Heart right ventricle (tissue), 16 donors: ENCODE measurements at regions of chr5 and their contacts with region 1.

Region 1: GRCh38 chr5:146446853-146447733 is at the start of gene TCERG1:
- DNase-seq: peak; percentile 99 to 100
- ATAC-seq: peak; percentile 95 to 99 (median 98)
- H3K4me3 ChIP-seq: peak within 1 kb of the TSS; percentile 66 to 99 (median 94)
- H3K27ac ChIP-seq: peak within 1 kb of the TSS; percentile 46 to 96 (median 86)
- H3K4me1 ChIP-seq: peaks cover 4 to 44% (median 29%) of the 10 kb centered on the region in 9 donors
- H3K27me3 ChIP-seq: no peaks in the 10 kb centered on the region
- CTCF ChIP-seq: peak; percentile 69 to 96 (median 81)
- total RNA-seq, gene TCERG1: 16.9 to 26.6 (median 21.1) TPM

Region 2: GRCh38 chr5:146203011-146203871 is 243.9 kb before region 1 on chr5 and contains the start of gene RBM27:
- intact Hi-C with region 1: loop called in 1 of 10 experiments (anchors 10 kb)
- DNase-seq: peak; percentile 96
- ATAC-seq: peak; percentile 100
- H3K4me3 ChIP-seq: peak within 1 kb of the TSS; percentile 63 to 86 (median 76)
- H3K27ac ChIP-seq: peak within 1 kb of the TSS; percentile 9 to 92 (median 84)
- H3K4me1 ChIP-seq: peaks cover 2 to 43% (median 36%) of the 10 kb centered on the region in 9 donors
- H3K27me3 ChIP-seq: no peaks in the 10 kb centered on the region
- CTCF ChIP-seq: no peak
- total RNA-seq, gene RBM27: 10.8 to 21.5 (median 17.0) TPM

Region 3: DNA sequence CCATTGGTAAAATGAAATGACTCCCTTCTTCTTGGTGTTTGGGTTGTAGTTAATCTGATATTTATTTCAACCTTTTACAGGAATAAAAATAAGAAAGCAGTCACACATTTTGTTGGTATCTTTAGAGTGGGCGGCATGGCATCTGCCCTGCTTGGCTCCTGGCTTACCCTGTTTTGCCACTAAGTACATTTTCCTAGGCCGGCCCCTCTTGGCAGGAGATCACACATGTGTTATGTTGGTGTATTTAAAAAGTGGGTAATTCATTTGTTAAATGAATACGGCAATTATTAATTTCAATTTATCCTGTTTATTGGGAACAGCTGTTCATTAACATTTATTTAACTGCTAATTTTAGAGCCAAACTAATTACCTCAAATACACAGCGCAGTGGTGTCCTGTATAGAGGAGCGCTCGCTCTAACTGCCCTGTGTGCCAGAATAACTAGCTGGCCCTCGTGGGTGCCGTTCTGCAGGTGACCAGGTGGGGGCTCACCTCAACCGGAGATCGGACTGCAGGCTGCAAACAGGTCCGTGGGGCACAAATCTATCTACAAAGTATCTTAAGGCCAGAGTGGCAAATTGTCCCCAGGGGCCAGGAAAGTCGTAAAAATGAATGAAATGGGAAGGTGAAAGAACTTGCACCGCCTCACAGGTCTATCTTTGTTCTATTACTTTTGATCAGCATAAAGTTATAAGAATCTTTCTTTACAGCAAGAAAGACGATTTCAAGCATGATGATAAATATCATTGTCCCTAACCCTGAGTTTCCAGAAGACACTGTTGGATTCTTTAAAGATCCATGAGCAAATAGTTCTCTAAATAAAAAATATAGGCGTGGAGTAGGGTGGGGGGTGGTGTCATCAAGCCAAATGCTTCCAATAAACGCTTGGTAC is 95.1 kb after region 1 on chr5:
- intact Hi-C with region 1: no loop called
- DNase-seq: peak; percentile 55 to 59
- ATAC-seq: peak in 7 of 8 donors; percentile 49 to 85 (median 76)
- H3K4me3 ChIP-seq: no peak overlapping the region
- H3K27ac ChIP-seq: no peak overlapping the region
- H3K4me1 ChIP-seq: no peaks in the 10 kb centered on the region
- H3K27me3 ChIP-seq: peaks cover 0 to 5% (median 0%) of the 10 kb centered on the region in 7 donors
- CTCF ChIP-seq: peak; percentile 46 to 82 (median 76)

Region 4: GRCh38 chr5:146722361-146722791 is 275.3 kb after region 1 on chr5:
- intact Hi-C with region 1: no loop called
- DNase-seq: no peak
- ATAC-seq: no peak
- H3K4me3 ChIP-seq: no peak overlapping the region
- H3K27ac ChIP-seq: no peak overlapping the region
- H3K4me1 ChIP-seq: no peaks in the 10 kb centered on the region
- H3K27me3 ChIP-seq: peaks cover 0 to 3% (median 0%) of the 10 kb centered on the region in 7 donors
- CTCF ChIP-seq: no peak